Mammary epithelial cell (primary cell): ENCODE measurements at regions of chr3 and their contacts with region 1.

Region 1: DNA sequence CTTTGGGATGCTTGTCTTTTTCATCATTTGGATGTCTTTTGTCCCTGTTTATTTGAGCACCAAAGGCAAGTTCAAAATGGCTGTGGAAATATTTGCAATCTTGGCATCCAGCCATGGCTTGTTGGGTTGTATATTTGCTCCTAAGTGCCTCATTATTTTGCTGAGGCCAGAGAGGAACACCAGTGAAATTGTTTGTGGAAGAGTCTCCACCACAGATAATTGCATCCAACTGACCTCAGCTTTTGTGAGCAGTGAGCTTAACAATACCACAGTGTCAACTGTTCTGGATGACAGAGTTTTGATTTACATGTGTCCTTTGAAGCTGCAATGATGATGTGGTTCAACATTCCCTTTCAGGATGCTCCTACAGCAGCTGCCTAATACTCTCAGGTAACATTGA is 83.0 kb upstream of the KCNAB1 start:
- DNase-seq: no peak
- H3K4me3 ChIP-seq: no peak overlapping the region
- H3K27ac ChIP-seq: no peak overlapping the region
- H3K4me1 ChIP-seq: no peaks in the 10 kb centered on the region
- H3K27me3 ChIP-seq: peaks cover 3% of the 10 kb centered on the region
- CTCF ChIP-seq: no peak

Region 2: DNA sequence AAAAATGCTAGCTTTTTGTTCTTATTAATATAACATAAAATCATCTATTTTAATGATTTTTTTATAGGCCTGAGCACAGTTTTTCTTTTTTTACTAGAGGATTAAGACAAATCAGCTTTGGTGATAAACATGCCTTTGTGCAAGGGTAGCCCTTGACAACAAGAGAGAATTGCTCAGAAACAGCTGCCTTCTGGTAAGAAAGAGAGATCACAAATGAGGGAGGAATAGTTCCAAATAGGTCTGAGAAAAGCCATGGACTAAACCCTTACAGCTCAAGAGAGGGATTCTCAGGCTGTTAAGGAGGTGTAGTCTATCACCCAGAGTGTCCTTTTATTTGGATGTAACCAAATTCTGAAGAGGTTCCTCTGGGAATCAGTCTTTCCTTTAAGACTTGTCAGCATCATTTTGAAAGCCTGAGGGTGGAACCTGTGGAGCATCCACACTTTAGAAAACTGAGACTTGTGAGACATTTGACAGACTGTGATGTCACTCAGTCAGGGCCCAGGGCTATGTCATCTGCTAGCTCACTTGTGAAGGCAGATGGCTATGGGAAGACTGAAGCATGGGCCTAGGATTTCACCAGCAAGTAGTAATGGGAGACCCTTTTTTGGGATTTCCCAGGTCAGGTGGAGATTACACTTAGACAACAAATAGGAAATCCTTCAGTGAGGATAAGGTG is 19.9 kb before region 1 on chr3:
- CTCF ChIA-PET with region 1: no interaction called
- dilution Hi-C with region 1: no loop called
- in situ Hi-C with region 1: no loop called
- intact Hi-C with region 1: loop called (anchors 2 kb)
- DNase-seq: no peak
- H3K4me3 ChIP-seq: no peak overlapping the region
- H3K27ac ChIP-seq: no peak overlapping the region
- H3K4me1 ChIP-seq: no peaks in the 10 kb centered on the region
- H3K27me3 ChIP-seq: no peaks in the 10 kb centered on the region
- CTCF ChIP-seq: no peak